ENCODE measurements at regions of chr1 and their contacts with region 1.

Region 1: DNA sequence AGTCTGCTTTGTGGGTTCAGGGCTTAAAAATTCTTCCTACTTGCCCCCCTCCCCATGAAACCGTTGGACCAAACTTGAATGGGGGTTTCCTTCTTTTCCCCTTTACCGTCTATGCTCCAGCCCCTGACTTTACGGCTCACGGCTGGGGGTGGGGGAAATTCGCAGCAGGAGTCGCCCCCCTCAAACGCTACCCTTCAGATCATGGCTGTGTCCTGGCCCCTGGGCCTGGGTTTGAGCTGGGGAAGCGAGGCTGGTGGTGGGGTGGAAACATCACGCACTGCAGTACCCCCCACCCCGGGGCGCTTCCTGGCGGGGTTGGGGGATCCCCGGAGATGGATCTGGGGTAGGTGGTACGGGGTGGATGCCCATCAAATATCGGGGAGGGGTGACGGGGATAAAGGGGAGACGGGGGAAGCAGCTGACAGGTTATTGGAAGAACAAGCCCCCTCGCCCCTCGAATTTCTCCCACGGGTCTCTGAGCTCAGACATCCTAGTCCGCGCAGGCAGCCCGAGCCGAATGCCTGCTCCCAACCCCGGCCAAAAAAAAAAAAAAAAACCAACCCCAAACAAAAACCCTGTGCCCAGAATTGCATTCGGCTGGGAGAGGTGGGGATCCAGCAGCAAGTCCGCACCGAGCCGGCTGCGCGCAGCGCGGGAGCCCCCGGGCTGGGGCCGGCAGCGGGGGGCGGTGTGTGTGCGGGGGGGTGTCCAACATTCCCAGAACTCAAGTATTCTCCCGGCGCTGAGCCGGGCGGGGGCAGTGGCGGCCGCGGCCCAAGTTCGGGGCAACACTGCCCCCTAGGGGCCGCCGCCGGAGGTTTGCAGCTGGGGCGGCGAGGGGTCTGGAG is 59.0 kb upstream of the ACOT11 start:
- DNase-seq: peak; percentile 83
- ATAC-seq: peak; percentile 68
- H3K4me3 ChIP-seq: peak overlapping the region; percentile 64 to 82 (median 74)
- H3K4me3 Mint-ChIP-seq: peak overlapping the region; percentile 85
- H3K27ac ChIP-seq: peak overlapping the region; percentile 18 to 76
- H3K27ac Mint-ChIP-seq: peak overlapping the region; percentile 78
- H3K4me1 ChIP-seq: peaks cover 17 to 37% of the 10 kb centered on the region in 2 donors
- H3K4me1 Mint-ChIP-seq: peaks cover 24% of the 10 kb centered on the region
- H3K27me3 ChIP-seq: peaks cover 0 to 11% (median 4%) of the 10 kb centered on the region in 4 experiments
- H3K27me3 Mint-ChIP-seq: peaks cover 12% of the 10 kb centered on the region
- CTCF ChIP-seq: peak; percentile 99

Region 2: DNA sequence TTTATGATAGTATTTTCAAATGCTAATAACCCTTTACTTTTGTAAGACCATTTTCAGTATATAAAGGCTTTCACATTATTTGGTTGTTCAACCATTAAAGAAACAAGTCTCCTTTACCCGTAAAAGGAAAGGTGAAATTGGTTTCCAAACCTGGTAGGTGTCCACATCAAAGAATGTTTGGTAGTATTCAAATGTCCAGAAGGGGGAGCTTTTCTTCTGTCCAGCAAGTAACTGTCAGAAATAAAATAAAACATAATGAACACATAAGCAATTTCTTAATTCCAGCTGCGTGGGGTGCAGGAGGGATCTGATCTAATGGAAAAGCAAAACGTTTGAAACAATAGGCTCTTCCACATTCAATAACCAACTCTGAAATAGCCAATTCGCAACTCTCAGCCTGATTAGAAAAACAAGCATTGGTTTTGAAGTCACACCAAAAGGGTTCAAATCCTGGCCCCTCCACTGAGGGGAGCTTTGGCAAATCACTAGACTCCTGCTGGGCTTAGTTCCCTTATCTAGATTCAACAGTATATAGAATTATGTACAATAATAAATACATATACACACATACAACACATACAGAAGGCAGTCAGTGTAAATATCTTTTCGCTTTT is 610.4 kb before region 1 on chr1:
- CTCF ChIA-PET with region 1: no interaction called
- POLR2A ChIA-PET with region 1: no interaction called
- intact Hi-C with region 1: loop called (anchors 2 kb)
- DNase-seq: peak; percentile 44
- ATAC-seq: no peak
- H3K4me3 ChIP-seq: no peak overlapping the region
- H3K4me3 Mint-ChIP-seq: no peak overlapping the region
- H3K27ac ChIP-seq: no peak overlapping the region
- H3K27ac Mint-ChIP-seq: no peak overlapping the region
- H3K4me1 ChIP-seq: no peaks in the 10 kb centered on the region
- H3K4me1 Mint-ChIP-seq: no peaks in the 10 kb centered on the region
- H3K27me3 ChIP-seq: no peaks in the 10 kb centered on the region
- H3K27me3 Mint-ChIP-seq: no peaks in the 10 kb centered on the region
- CTCF ChIP-seq: peak; percentile 63

Region 3: GRCh38 chr1:54070171-54070837 is 418.7 kb before region 1 on chr1:
- CTCF ChIA-PET with region 1: interaction called, 61 read pairs
- POLR2A ChIA-PET with region 1: no interaction called
- intact Hi-C with region 1: no loop called
- DNase-seq: peak; percentile 69
- ATAC-seq: peak; percentile 92
- H3K4me3 ChIP-seq: no peak overlapping the region
- H3K4me3 Mint-ChIP-seq: no peak overlapping the region
- H3K27ac ChIP-seq: no peak overlapping the region
- H3K27ac Mint-ChIP-seq: no peak overlapping the region
- H3K4me1 ChIP-seq: no peaks in the 10 kb centered on the region
- H3K4me1 Mint-ChIP-seq: no peaks in the 10 kb centered on the region
- H3K27me3 ChIP-seq: no peaks in the 10 kb centered on the region
- H3K27me3 Mint-ChIP-seq: no peaks in the 10 kb centered on the region
- CTCF ChIP-seq: peak; percentile 94

Region 4: GRCh38 chr1:54180701-54181360 is 308.2 kb before region 1 on chr1:
- CTCF ChIA-PET with region 1: interaction called, 10 read pairs
- POLR2A ChIA-PET with region 1: no interaction called
- intact Hi-C with region 1: loop called (anchors 5 kb)
- DNase-seq: no peak
- ATAC-seq: no peak
- H3K4me3 ChIP-seq: no peak overlapping the region
- H3K4me3 Mint-ChIP-seq: no peak overlapping the region
- H3K27ac ChIP-seq: no peak overlapping the region
- H3K27ac Mint-ChIP-seq: no peak overlapping the region
- H3K4me1 ChIP-seq: no peaks in the 10 kb centered on the region
- H3K4me1 Mint-ChIP-seq: no peaks in the 10 kb centered on the region
- H3K27me3 ChIP-seq: no peaks in the 10 kb centered on the region
- H3K27me3 Mint-ChIP-seq: no peaks in the 10 kb centered on the region
- CTCF ChIP-seq: no peak

Region 5: DNA sequence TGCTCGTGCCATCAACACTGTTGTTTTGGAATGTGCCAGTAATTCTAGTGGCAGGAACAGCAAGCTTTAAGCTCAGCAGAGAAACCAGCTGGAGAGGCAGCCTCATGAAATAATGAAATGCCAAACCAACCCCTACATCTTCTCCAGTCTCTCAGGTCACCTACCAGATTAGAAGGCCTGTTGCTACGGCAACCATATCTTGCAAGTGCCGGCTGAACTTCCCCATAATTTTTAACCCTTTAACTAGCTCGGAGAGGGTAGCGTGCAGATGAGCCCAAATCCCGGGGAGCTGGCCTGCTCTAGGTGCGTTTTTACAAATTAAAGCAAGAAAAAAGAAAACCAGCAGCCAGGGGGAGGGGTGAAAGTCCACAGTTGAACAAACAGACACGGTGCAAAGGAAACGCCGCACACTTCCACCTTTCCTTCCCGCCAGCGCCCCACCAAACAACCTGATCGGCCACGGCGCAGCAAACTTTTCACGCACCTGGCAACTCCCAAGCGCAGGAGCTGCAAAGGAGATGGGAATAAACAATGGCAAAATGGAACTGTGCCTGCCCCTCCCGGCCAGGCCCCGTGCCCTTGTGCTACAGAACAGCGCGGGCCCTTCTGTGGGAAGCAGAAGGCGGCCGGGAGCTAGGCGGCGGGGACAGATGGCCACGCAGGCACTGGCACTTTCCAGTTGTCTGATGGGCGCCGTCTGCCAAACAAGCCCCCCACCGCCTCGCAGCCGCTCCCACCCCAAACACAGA is 132.9 kb before region 1 on chr1:
- CTCF ChIA-PET with region 1: interaction called, 4 read pairs
- POLR2A ChIA-PET with region 1: no interaction called
- intact Hi-C with region 1: loop called (anchors 5 kb)
- DNase-seq: peak; percentile 51
- ATAC-seq: peak; percentile 51
- H3K4me3 ChIP-seq: peak overlapping the region; percentile 21 to 52 (median 46)
- H3K4me3 Mint-ChIP-seq: peak overlapping the region; percentile 82
- H3K27ac ChIP-seq: no peak overlapping the region
- H3K27ac Mint-ChIP-seq: no peak overlapping the region
- H3K4me1 ChIP-seq: peaks cover 12 to 19% of the 10 kb centered on the region in 2 donors
- H3K4me1 Mint-ChIP-seq: peaks cover 19% of the 10 kb centered on the region
- H3K27me3 ChIP-seq: no peaks in the 10 kb centered on the region
- H3K27me3 Mint-ChIP-seq: no peaks in the 10 kb centered on the region
- CTCF ChIP-seq: no peak

Region 6: GRCh38 chr1:54764133-54764921 is 275.3 kb after region 1 on chr1 and contains the start of gene PARS2:
- CTCF ChIA-PET with region 1: no interaction called
- POLR2A ChIA-PET with region 1: no interaction called
- intact Hi-C with region 1: loop called (anchors 1 kb)
- DNase-seq: peak; percentile 99
- ATAC-seq: peak; percentile 92
- H3K4me3 ChIP-seq: peak within 1 kb of the TSS; percentile 75 to 96 (median 91)
- H3K4me3 Mint-ChIP-seq: peak within 1 kb of the TSS; percentile 96
- H3K27ac ChIP-seq: peak within 1 kb of the TSS; percentile 47 to 81
- H3K27ac Mint-ChIP-seq: peak within 1 kb of the TSS; percentile 92
- H3K4me1 ChIP-seq: peaks cover 8 to 10% of the 10 kb centered on the region in 2 donors
- H3K4me1 Mint-ChIP-seq: peaks cover 20% of the 10 kb centered on the region
- H3K27me3 ChIP-seq: no peaks in the 10 kb centered on the region
- H3K27me3 Mint-ChIP-seq: no peaks in the 10 kb centered on the region
- CTCF ChIP-seq: no peak
- total RNA-seq, gene PARS2: 4.5 and 4.9 TPM in 2 replicates